Sciatic nerve (tissue), 2 donors: ENCODE measurements at regions of chr4 and their contacts with region 1.

Region 1: DNA sequence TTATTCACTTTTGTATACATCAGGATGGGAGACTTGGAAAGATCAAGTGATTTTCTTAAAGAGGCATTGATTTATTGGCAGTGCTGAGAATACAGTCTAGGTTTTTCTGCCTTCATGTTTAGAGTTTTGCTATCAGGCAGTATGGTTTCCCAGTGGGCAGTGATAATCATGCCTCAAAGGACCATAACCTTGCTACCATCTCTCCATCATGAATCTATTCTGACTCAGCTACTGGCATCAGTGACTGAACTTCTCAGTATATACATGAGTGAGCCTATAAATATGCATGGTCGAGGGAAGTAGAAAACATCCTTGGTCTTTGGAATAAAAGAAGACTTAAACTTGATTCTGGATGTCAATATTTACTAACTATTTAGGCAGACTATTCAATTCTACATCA is 562.0 kb upstream of the AADAT start:
- DNase-seq: no peak
- ATAC-seq: no peak

Region 2: DNA sequence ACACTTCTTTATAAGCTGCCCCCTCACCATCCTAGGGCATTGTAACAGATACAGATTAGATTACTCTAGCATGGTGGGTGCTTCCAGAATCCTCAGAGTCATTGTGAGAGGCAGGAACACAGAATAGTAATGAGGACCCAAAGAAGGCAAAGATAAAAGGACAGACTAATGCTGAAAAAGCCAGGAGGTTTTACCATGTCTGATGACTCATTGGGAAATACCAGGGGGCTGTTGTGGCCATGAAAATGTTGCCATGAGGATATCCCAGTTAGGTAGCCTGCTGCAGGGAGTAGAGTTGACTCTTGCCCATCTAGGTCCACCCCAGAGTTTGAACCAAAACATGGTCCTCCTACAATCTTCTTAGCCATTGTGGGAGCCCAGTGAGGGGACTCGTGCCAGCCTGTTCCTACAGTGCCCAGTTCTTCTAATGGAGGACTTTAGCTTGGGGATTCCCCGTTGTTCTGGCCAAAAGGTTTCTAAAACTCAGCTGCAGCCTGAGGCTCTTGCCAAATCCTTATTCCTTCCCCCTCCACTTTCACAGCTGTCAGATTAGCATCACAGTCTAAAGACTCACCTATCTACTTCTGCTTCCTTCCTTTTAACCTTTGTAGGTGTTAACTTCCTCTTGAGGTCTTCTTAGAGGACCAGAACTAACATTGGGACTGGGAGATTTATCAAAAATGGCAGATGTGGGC is 23.9 kb after region 1 on chr4:
- intact Hi-C with region 1: loop called (anchors 2 kb)
- DNase-seq: no peak
- ATAC-seq: no peak